ENCODE measurements at regions of chr13 and their contacts with region 1.

Region 1: GRCh38 chr13:78759704-78760103 is 100.7 kb upstream of the OBI1 start:
- DNase-seq: no peak
- ATAC-seq: no peak
- H3K4me3 ChIP-seq: no peak overlapping the region
- H3K27ac ChIP-seq: no peak overlapping the region
- H3K4me1 ChIP-seq: no peaks in the 10 kb centered on the region
- H3K27me3 ChIP-seq: no peaks in the 10 kb centered on the region
- CTCF ChIP-seq: peak; percentile 16; the same call in 1 of the 2 replicates

Region 2: DNA sequence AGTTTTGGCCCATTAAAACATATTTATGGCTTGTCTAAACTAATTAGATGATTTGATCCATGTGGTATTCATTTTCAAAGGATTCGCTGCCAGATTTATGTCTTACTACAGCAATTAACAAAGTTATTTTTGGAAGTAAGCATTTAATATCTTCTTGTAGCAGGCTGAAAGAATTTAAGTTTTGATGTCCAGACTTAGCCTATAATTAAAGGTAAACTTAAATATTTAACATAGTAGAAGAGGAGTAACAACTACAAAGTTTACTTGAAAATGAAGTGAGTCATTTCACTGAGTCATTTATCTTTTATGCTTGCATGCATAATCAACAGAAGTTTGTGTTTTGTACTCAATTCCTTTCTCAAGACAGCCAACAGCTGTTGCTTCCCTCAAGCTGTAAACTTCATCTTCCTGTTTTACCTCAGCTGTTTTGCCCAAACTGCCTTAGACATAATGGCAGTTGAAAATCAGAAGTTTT is 899.2 kb before region 1 on chr13:
- CTCF ChIA-PET with region 1: no interaction called
- POLR2A ChIA-PET with region 1: interaction called, 10 read pairs
- in situ Hi-C with region 1: no loop called
- intact Hi-C with region 1: no loop called
- DNase-seq: no peak
- ATAC-seq: no peak
- H3K4me3 ChIP-seq: no peak overlapping the region
- H3K27ac ChIP-seq: no peak overlapping the region
- H3K4me1 ChIP-seq: no peaks in the 10 kb centered on the region
- H3K27me3 ChIP-seq: no peaks in the 10 kb centered on the region
- CTCF ChIP-seq: no peak

Region 3: GRCh38 chr13:78658635-78659449 is 100.9 kb before region 1 on chr13 and contains the start of gene OBI1:
- CTCF ChIA-PET with region 1: no interaction called
- POLR2A ChIA-PET with region 1: no interaction called
- in situ Hi-C with region 1: no loop called
- intact Hi-C with region 1: no loop called
- DNase-seq: no peak
- ATAC-seq: peak; percentile 96
- H3K4me3 ChIP-seq: peak within 1 kb of the TSS; percentile 61 to 81
- H3K27ac ChIP-seq: peak within 1 kb of the TSS; percentile 90
- H3K4me1 ChIP-seq: no peaks in the 10 kb centered on the region; the same call in 1 of the 2 replicates
- H3K27me3 ChIP-seq: no peaks in the 10 kb centered on the region
- CTCF ChIP-seq: no peak
- total RNA-seq, gene OBI1: 9.1 TPM

Region 4: GRCh38 chr13:79212064-79212619 is 452.4 kb after region 1 on chr13:
- CTCF ChIA-PET with region 1: no interaction called
- POLR2A ChIA-PET with region 1: no interaction called
- in situ Hi-C with region 1: no loop called
- intact Hi-C with region 1: no loop called
- DNase-seq: no peak
- ATAC-seq: no peak
- H3K4me3 ChIP-seq: no peak overlapping the region
- H3K27ac ChIP-seq: no peak overlapping the region
- H3K4me1 ChIP-seq: no peaks in the 10 kb centered on the region
- H3K27me3 ChIP-seq: no peaks in the 10 kb centered on the region
- CTCF ChIP-seq: no peak

Measured in Panc1 (cell line).